WTC11 (cell line): ENCODE measurements at regions of chr19 and their contacts with region 1.

Region 1: DNA sequence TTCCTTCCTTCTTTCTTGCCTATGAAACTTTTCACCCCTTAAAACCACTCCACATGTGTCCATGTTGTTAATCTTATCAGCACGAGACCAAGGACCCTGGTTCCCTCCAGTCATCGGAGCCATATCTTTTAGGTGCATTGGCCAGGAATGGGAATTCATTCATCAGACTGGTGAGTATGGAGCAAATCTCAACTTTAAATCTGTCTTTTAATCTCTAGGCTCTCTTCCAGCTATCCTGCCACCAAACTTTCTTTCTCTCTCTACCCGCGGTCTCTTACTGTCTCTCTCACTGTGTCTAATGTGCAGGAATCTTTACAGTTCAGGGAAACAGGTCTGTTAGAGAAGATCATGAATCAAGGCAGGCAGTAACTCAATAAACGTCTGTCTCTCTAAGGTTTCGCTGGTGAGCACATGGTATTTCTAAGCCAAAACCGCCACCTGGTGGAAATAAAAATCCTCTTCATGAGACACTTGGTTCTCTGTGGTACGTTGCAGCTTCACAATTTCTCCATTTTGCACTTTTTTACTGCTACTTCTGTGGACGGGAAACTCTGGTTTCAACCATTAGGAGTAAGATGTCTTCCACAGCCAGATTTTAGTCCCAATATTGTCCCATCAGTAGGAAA is 16.1 kb downstream of the LGALS16 start:
- DNase-seq: peak; percentile 26
- ATAC-seq: peak; percentile 81
- H3K4me3 Mint-ChIP-seq: peak overlapping the region; percentile 24; the same call in 1 of the 2 replicates
- H3K27ac Mint-ChIP-seq: no peak overlapping the region
- H3K4me1 Mint-ChIP-seq: peaks cover 16% of the 10 kb centered on the region
- H3K27me3 Mint-ChIP-seq: peaks cover 13% of the 10 kb centered on the region; the same call in 1 of the 2 replicates
- CTCF ChIP-seq: peak; percentile 39; the same call in 1 of the 2 replicates

Region 2: DNA sequence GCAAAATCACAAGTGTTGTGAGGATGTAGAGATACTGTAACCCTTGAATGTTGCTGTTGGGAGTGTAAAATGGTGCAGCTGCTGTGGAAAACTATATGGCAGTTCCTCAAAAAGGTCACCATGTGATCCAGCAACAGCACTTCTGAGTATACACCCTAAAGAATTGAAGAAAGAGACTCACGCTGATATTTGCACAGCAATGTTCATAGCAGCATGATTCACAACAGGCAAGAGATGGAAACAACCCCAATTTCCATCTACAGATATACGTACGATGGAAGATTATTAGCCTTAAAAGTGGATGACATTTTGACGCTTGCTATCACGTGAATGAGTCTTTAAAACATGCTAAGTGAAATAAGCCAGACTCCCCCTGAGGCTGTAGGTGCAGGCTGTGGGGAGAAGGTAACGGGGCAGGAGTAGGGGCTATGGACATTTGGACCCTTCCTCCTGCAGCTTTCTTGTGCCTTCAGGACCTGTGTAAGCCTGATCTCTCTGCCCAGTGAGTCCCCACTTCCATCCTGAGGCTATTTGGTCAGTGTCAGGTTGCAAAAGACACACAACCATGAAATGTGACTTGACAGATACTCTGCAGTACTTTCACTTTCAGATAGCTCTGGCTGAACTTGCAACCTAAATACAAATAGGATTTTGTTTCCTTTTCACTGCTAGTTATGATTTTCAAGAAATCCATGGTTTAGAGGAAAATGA is 114.3 kb before region 1 on chr19:
- CTCF ChIA-PET with region 1: interaction called, 52 read pairs
- POLR2A ChIA-PET with region 1: no interaction called
- DNase-seq: no peak
- ATAC-seq: no peak
- H3K4me3 Mint-ChIP-seq: no peak overlapping the region
- H3K27ac Mint-ChIP-seq: no peak overlapping the region
- H3K4me1 Mint-ChIP-seq: 0 out of 2 replicates have a peak, but pooled peaks cover 5% of the 10 kb centered on the region
- H3K27me3 Mint-ChIP-seq: peaks cover 17% of the 10 kb centered on the region
- CTCF ChIP-seq: no peak

Region 3: GRCh38 chr19:39765091-39766076 is 93.5 kb after region 1 on chr19:
- CTCF ChIA-PET with region 1: interaction called, 10 read pairs
- POLR2A ChIA-PET with region 1: no interaction called
- DNase-seq: peak; percentile 73
- ATAC-seq: peak; percentile 38
- H3K4me3 Mint-ChIP-seq: no peak overlapping the region
- H3K27ac Mint-ChIP-seq: no peak overlapping the region
- H3K4me1 Mint-ChIP-seq: peaks cover 34% of the 10 kb centered on the region
- H3K27me3 Mint-ChIP-seq: peaks cover 2% of the 10 kb centered on the region; the same call in 1 of the 2 replicates
- CTCF ChIP-seq: peak; percentile 83